ENCODE measurements at regions of chr9 and their contacts with region 1.

Region 1: GRCh38 chr9:129036241-129036922 is at the start of gene MIGA2:
- DNase-seq: peak; percentile 96 to 99 (median 97)
- H3K4me3 ChIP-seq: peak within 1 kb of the TSS; percentile 80 to 99 (median 94)
- H3K4me3 Mint-ChIP-seq: peak within 1 kb of the TSS; percentile 96 to 98
- H3K27ac ChIP-seq: peak within 1 kb of the TSS; percentile 10 to 85
- H3K27ac Mint-ChIP-seq: peak within 1 kb of the TSS; percentile 80 to 94 (median 83)
- H3K4me1 ChIP-seq: peaks cover 22 to 26% of the 10 kb centered on the region in 2 donors
- H3K4me1 Mint-ChIP-seq: peaks cover 24% of the 10 kb centered on the region
- H3K27me3 ChIP-seq: no peaks in the 10 kb centered on the region
- H3K27me3 Mint-ChIP-seq: peaks cover 0 to 1% (median 0%) of the 10 kb centered on the region in 3 donors
- CTCF ChIP-seq: no peak
- polyA plus RNA-seq, gene MIGA2: 1.9 to 45.4 (median 5.9) TPM

Region 2: DNA sequence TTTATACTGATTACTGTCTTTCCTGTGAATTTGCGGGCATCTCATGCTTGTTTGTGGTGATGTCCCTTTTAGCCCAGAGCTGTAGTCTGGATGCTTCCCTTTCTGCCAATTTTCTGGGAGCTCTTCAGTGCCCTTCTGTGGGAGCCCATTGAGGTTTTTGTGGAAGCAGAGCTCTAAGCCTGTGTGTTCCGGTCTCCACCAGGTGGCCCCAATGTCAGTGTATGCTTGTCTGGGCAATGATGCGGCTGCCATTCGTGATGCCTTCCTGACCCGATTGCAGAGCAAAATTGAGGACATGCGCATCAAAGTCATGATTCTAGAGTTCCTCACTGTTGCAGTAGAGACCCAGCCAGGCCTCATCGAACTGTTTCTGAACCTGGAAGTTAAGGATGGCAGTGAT is 43.4 kb before region 1 on chr9:
- intact Hi-C with region 1: no loop called
- DNase-seq: no peak
- H3K4me3 ChIP-seq: no peak overlapping the region
- H3K4me3 Mint-ChIP-seq: no peak overlapping the region
- H3K27ac ChIP-seq: no peak overlapping the region
- H3K27ac Mint-ChIP-seq: no peak overlapping the region
- H3K4me1 ChIP-seq: no peaks in the 10 kb centered on the region
- H3K4me1 Mint-ChIP-seq: no peaks in the 10 kb centered on the region
- H3K27me3 ChIP-seq: no peaks in the 10 kb centered on the region
- H3K27me3 Mint-ChIP-seq: no peaks in the 10 kb centered on the region
- CTCF ChIP-seq: no peak

Region 3: GRCh38 chr9:129080602-129081387 is 44.4 kb after region 1 on chr9 and contains the start of gene DOLPP1:
- intact Hi-C with region 1: loop called (anchors 2 to 5 kb)
- DNase-seq: peak; percentile 99
- H3K4me3 ChIP-seq: peak within 1 kb of the TSS; percentile 54 to 93 (median 91)
- H3K4me3 Mint-ChIP-seq: peak within 1 kb of the TSS; percentile 85 to 88
- H3K27ac ChIP-seq: peak within 1 kb of the TSS; percentile 64 to 77
- H3K27ac Mint-ChIP-seq: peak within 1 kb of the TSS; percentile 63 to 88 (median 79)
- H3K4me1 ChIP-seq: peaks cover 18 to 22% of the 10 kb centered on the region in 2 donors
- H3K4me1 Mint-ChIP-seq: peaks cover 20% of the 10 kb centered on the region
- H3K27me3 ChIP-seq: no peaks in the 10 kb centered on the region
- H3K27me3 Mint-ChIP-seq: peaks cover 0 to 5% (median 2%) of the 10 kb centered on the region in 3 donors
- CTCF ChIP-seq: no peak
- polyA plus RNA-seq, gene DOLPP1: 5.4 to 6.6 (median 5.9) TPM

Measured in CD14-positive monocyte (primary cell).